WTC11 (cell line): ENCODE measurements at regions of chr17 and their contacts with region 1.

Region 1: GRCh38 chr17:82668631-82669099 is 20.4 kb upstream of the WDR45B start:
- DNase-seq: peak; percentile 79
- ATAC-seq: peak; percentile 98
- H3K4me3 Mint-ChIP-seq: 0 out of 2 replicates have a peak overlapping the region, but pooled peaks have one; percentile 26
- H3K27ac Mint-ChIP-seq: peak overlapping the region; percentile 83; the same call in 1 of the 2 replicates
- H3K4me1 Mint-ChIP-seq: peaks cover 4% of the 10 kb centered on the region
- H3K27me3 Mint-ChIP-seq: no peaks in the 10 kb centered on the region
- CTCF ChIP-seq: 0 out of 2 replicates have a peak, but pooled peaks have one; percentile 21

Region 2: GRCh38 chr17:82592767-82593589 is 75.7 kb before region 1 on chr17:
- CTCF ChIA-PET with region 1: no interaction called
- POLR2A ChIA-PET with region 1: no interaction called
- DNase-seq: peak; percentile 51
- ATAC-seq: peak; percentile 36
- H3K4me3 Mint-ChIP-seq: peak overlapping the region; percentile 49
- H3K27ac Mint-ChIP-seq: peak overlapping the region; percentile 87
- H3K4me1 Mint-ChIP-seq: peaks cover 10% of the 10 kb centered on the region
- H3K27me3 Mint-ChIP-seq: no peaks in the 10 kb centered on the region
- CTCF ChIP-seq: no peak

Region 3: GRCh38 chr17:82639628-82640027 is 29.0 kb before region 1 on chr17:
- CTCF ChIA-PET with region 1: no interaction called
- POLR2A ChIA-PET with region 1: no interaction called
- DNase-seq: no peak
- ATAC-seq: no peak
- H3K4me3 Mint-ChIP-seq: no peak overlapping the region
- H3K27ac Mint-ChIP-seq: no peak overlapping the region
- H3K4me1 Mint-ChIP-seq: 0 out of 2 replicates have a peak, but pooled peaks cover 4% of the 10 kb centered on the region
- H3K27me3 Mint-ChIP-seq: no peaks in the 10 kb centered on the region
- CTCF ChIP-seq: no peak

Region 4: GRCh38 chr17:82649501-82650261 is 19.0 kb before region 1 on chr17:
- CTCF ChIA-PET with region 1: no interaction called
- POLR2A ChIA-PET with region 1: no interaction called
- DNase-seq: no peak
- ATAC-seq: no peak
- H3K4me3 Mint-ChIP-seq: peak overlapping the region; percentile 59
- H3K27ac Mint-ChIP-seq: no peak overlapping the region
- H3K4me1 Mint-ChIP-seq: peaks cover 17% of the 10 kb centered on the region
- H3K27me3 Mint-ChIP-seq: peaks cover 8% of the 10 kb centered on the region
- CTCF ChIP-seq: no peak

Region 5: DNA sequence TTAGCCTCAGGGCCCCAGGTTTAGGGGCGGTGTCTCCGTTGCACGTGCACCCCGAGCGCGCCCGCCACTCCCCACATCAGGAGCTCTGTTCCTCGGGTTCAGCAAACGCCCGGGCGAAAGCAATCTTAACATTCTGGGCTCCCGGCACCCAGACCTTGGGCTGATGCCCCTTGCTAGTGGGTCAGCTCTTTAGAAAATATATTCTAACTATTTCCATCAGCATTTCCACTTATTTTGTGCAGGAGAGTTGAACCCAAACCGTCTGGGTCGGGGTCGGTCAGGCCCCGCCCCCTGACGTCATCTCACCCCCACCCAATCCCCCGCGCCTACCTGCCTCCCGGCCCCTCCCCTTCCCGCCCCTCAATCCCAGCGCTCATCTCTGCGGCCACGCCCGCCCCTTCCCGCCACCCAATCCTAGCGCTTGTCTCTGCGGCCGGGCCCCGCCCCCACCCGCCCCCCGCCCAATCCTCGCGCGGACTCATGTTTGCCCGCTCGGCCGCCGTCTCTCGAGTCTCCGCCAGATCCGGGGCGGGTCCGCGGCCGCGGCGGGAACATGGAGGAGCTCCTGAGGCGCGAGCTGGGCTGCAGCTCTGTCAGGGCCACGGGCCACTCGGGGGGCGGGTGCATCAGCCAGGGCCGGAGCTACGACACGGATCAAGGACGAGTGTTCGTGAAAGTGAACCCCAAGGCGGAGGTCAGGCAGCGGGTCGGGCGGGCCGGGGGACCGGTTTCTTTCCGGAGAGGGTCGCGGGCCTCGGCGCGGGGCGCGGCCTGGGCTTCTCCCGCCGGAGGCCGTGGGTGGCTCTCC is 47.7 kb after region 1 on chr17 and contains the start of gene FN3KRP:
- CTCF ChIA-PET with region 1: interaction called, 15 read pairs
- POLR2A ChIA-PET with region 1: no interaction called
- DNase-seq: peak; percentile 94
- ATAC-seq: peak; percentile 88
- H3K4me3 Mint-ChIP-seq: peak within 1 kb of the TSS; percentile 89
- H3K27ac Mint-ChIP-seq: peak within 1 kb of the TSS; percentile 76
- H3K4me1 Mint-ChIP-seq: peaks cover 13% of the 10 kb centered on the region
- H3K27me3 Mint-ChIP-seq: peaks cover 28% of the 10 kb centered on the region
- CTCF ChIP-seq: no peak
- total RNA-seq, gene FN3KRP: 19.7 to 24.4 TPM (median 23.2 TPM) in 3 replicates

Region 6: DNA sequence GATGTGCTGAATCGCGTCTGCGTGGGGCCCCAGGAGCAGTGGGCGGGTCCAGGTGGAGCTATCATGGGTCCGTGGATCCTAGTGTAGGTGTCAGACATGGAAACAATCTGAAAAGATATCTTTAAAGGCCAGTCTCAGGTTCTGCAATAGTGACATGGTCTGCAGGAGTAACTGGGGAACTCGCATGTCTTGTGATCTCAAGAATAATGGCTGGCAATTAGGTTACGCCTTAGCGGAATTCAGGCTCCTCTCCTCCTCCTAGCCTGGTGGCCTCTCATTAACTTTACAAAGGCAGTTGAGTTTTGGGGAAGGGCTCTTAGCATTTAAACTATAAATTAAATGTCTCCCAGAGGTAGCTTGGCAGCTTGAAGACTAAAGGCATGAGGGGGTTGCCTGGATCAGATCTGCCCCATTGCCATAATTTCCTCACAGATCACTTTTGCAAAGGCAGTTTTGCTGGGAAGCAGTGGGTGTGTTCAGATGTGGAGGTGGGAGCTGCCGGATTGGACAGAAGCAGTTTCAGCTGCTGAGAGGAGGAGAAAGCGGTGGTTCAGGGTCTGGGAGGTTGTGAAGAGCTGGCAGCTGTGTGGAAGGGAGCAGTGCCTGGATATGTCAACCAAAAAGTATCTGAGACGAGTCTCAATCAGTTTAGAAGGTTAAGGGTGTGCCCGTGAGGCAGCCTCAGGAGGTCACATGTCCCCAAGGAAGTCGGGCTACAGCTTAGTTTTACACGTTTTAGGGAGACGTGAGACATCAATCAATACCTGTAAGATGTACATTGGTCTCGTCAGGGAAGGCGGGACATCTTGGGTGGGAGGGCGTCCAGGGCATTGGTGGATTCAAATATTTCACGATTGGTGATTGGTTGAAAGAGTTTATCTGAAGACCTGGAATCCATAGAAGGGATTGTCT is 85.9 kb after region 1 on chr17:
- CTCF ChIA-PET with region 1: interaction called, 11 read pairs
- POLR2A ChIA-PET with region 1: interaction called, 3 read pairs
- DNase-seq: peak; percentile 70
- ATAC-seq: peak; percentile 65
- H3K4me3 Mint-ChIP-seq: peak overlapping the region; percentile 89
- H3K27ac Mint-ChIP-seq: peak overlapping the region; percentile 98
- H3K4me1 Mint-ChIP-seq: peaks cover 47% of the 10 kb centered on the region
- H3K27me3 Mint-ChIP-seq: peaks cover 10% of the 10 kb centered on the region
- CTCF ChIP-seq: no peak

Region 7: DNA sequence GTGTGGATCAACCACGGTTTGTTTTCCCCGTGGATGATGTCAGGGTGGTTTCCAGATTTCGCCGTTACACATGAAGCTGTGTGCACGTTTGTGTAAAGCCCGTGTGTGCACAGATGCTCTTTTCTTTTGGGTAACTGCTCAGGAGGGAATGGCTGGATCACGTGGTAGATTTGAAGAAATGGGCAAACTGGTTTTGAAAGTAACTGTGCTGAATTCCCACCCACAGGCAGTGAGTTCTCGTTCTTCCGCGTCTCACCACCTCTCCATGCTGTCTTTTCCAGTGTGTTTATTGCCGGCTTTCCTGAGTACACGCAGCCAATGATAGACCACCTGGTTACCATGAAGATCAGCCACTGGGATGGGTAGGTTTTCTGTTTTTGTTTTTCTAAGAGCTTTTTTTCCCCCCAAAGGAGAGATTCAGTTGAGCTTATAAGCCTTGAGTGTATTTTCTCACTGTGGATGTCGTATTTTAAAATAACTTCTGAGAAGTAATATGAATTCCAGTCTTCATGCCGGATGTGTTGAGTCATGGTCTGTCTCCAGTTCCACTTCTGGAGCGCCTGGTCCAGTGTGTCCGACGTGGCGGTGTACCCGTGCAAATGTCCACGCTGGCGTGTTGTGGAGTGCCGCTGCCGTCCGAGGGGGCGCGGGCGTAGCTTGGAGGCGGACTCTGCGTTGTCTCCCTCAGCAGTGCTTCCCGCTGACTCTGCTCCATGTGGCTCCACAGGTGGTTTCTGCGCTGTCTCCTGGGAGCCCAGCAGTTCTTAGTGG is 231.9 kb after region 1 on chr17:
- CTCF ChIA-PET with region 1: no interaction called
- POLR2A ChIA-PET with region 1: no interaction called
- DNase-seq: no peak
- ATAC-seq: no peak
- H3K4me3 Mint-ChIP-seq: no peak overlapping the region
- H3K27ac Mint-ChIP-seq: peak overlapping the region; percentile 18; the same call in 1 of the 2 replicates
- H3K4me1 Mint-ChIP-seq: no peaks in the 10 kb centered on the region
- H3K27me3 Mint-ChIP-seq: no peaks in the 10 kb centered on the region
- CTCF ChIP-seq: no peak